HCT116 (cell line): ENCODE measurements at regions of chr1 and their contacts with region 1.

Region 1: DNA sequence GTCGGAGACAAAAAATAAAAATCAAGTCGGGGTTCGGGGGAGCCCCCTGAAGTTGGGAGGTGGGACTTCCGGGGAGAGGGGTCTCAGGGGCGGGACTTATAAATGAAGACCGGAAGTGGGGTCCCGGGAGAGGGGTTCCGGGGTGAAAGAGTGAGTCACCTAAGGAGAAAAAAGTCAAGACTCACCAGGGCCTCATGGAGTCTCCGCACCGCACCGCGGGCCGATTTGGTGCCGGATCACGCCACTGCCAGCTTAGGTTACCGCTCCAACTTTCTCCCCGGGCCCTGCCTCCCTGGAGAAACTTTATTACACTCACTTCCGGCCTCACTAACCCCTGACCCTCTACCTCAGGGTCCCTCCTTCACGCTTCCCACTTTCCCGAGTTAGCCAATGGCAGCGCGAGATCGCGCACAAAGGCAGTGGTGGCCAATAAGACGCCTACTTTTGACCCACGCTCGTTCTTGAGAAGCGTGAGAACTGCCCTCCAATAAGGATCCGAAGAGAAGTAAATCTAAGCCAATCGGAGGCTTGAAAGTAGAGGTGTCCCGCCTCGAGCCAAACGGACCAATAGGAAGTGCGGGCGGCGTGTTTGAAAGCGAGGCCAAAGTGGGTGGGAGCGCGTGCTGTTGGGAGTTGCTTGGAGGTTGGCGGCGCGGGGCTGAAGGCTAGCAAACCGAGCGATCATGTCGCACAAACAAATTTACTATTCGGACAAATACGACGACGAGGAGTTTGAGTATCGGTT is at the start of gene CKS1B:
- DNase-seq: peak; percentile 100
- ATAC-seq: peak; percentile 78
- H3K4me3 ChIP-seq: peak within 1 kb of the TSS; percentile 61 to 70
- H3K27ac ChIP-seq: peak within 1 kb of the TSS; percentile 86
- H3K4me1 ChIP-seq: peaks cover 40 to 64% of the 10 kb centered on the region in 2 experiments
- H3K27me3 ChIP-seq: no peaks in the 10 kb centered on the region
- CTCF ChIP-seq: no peak
- POLR2A ChIP-seq: no peak
- RAD21 ChIP-seq: no peak
- total RNA-seq, gene CKS1B: 229 TPM

Region 2: GRCh38 chr1:154961497-154962262 is 12.6 kb before region 1 on chr1 and contains the start of gene PYGO2:
- CTCF ChIA-PET with region 1: interaction called, 15 read pairs
- POLR2A ChIA-PET with region 1: interaction called, 38 read pairs
- RAD21 ChIA-PET with region 1: no interaction called
- intact Hi-C with region 1: no loop called
- DNase-seq: no peak
- ATAC-seq: peak; percentile 85
- H3K4me3 ChIP-seq: peak within 1 kb of the TSS; percentile 64 to 80
- H3K27ac ChIP-seq: peak within 1 kb of the TSS; percentile 92
- H3K4me1 ChIP-seq: peaks cover 18 to 48% of the 10 kb centered on the region in 2 experiments
- H3K27me3 ChIP-seq: no peaks in the 10 kb centered on the region
- CTCF ChIP-seq: peak in 2 of 3 experiments; percentile 32 to 54; a peak in 3 of 6 replicates
- POLR2A ChIP-seq: peak; percentile 65
- RAD21 ChIP-seq: no peak; the same call in 1 of the 2 replicates
- total RNA-seq, gene PYGO2: 37.2 TPM

Region 3: DNA sequence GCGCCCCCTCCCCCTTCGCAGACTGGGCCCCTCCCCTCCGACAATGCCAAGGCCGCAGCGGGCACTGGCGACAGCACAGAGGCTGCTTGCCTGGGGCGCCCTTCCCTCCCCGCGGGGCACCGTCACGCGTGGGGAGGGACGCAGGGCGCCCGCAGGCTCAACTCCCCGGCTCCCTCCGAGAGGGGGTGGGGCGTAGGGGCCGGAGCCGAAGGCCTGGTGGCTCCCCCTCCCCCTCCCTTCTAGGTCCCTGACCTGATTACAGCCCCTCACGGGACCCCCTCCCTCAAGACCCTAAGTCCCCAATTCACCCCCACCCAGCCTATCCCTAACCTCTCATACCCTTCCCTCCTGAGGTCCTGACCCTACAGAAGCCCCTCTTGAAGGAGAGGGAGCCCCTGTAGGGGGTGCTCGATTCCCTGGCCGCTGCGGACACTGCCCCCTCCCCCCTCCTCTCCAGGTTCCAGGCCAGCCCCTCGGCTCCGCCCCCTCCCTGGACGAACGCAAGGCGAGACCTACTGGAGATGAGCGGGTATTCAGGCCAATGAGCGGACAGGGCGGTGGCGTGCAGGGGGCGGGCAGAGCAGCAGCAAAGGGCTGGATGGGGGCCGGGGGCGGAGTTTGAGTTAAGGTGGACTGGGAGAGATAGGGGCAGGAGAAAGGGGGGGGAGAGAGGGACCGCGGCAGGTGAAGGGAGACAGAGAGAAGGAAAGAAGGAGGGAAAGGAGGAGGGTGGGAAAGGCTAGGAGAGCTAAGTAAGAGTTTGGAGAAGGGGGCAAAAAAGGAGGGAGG is 27.6 kb after region 1 on chr1:
- CTCF ChIA-PET with region 1: interaction called, 14 read pairs
- POLR2A ChIA-PET with region 1: interaction called, 22 read pairs
- RAD21 ChIA-PET with region 1: interaction called in 1 of 2 experiments, 4 read pairs
- intact Hi-C with region 1: loop called (anchors 1 kb)
- DNase-seq: peak; percentile 99
- ATAC-seq: peak; percentile 72
- H3K4me3 ChIP-seq: peak overlapping the region; percentile 85 to 98
- H3K27ac ChIP-seq: peak overlapping the region; percentile 99
- H3K4me1 ChIP-seq: peaks cover 22 to 66% of the 10 kb centered on the region in 2 experiments
- H3K27me3 ChIP-seq: no peaks in the 10 kb centered on the region
- CTCF ChIP-seq: peak in 2 of 3 experiments; percentile 52; a peak in 4 of 6 replicates
- POLR2A ChIP-seq: no peak
- RAD21 ChIP-seq: no peak

Region 4: DNA sequence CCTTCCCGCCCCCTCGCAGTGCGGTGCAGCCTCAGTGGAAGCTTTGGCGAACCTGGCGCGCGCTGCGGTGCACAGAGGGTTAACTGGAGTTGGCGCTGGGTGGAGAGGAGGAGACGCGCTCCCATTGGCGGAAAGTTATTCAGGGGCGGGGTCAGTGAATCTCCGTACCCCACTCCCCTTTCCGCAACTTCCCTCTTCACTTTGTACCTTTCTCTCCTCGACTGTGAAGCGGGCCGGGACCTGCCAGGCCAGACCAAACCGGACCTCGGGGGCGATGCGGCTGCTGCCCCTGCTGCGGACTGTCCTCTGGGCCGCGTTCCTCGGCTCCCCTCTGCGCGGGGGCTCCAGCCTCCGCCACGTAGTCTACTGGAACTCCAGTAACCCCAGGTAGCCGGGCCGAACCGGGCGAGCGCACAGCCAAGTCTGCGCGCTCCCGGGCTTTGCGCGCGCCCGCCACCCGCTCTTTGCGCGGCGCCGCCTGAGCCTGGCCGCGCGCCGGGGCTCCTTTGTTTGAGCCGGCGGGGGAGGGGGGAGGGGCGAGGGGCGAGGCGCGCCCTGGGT is 89.4 kb after region 1 on chr1 and contains the start of gene EFNA4:
- CTCF ChIA-PET with region 1: no interaction called
- POLR2A ChIA-PET with region 1: interaction called, 4 read pairs
- RAD21 ChIA-PET with region 1: no interaction called
- intact Hi-C with region 1: loop called (anchors 5 kb)
- DNase-seq: peak; percentile 79
- ATAC-seq: peak; percentile 79
- H3K4me3 ChIP-seq: peak within 1 kb of the TSS; percentile 77 to 84
- H3K27ac ChIP-seq: peak within 1 kb of the TSS; percentile 93
- H3K4me1 ChIP-seq: peaks cover 21 to 35% of the 10 kb centered on the region in 2 experiments
- H3K27me3 ChIP-seq: no peaks in the 10 kb centered on the region
- CTCF ChIP-seq: no peak
- POLR2A ChIP-seq: peak; percentile 76
- RAD21 ChIP-seq: no peak
- total RNA-seq, gene EFNA4: 9.8 TPM

Region 5: DNA sequence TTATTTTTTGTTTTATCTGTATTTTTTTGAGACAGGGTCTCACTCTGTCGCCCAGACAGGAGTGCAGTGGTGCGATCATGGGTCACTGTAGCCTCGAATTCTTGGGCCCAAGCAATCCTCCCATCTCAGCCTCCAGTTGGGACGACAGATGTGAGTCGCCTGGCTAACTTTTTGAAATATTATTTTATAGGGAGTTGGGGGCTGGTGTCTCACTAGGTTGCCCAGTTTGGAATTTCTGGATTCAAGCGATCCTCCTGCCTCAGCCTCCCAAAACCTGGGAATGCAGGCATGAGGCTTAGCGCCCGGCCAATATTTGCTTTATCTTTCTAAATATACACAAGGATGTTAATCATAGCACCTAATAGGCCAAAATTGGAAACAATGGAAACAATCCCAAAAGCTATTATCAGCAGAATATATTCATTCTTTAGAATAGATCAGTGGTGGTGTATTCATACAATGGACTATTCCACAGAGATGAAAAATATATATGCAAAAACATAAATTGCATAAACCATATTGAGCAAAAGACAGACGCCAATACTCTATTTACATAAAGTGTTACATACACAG is 770.6 kb after region 1 on chr1:
- CTCF ChIA-PET with region 1: no interaction called
- POLR2A ChIA-PET with region 1: no interaction called
- RAD21 ChIA-PET with region 1: no interaction called
- intact Hi-C with region 1: no loop called
- DNase-seq: no peak
- ATAC-seq: no peak
- H3K4me3 ChIP-seq: peak overlapping the region; percentile 66 to 78
- H3K27ac ChIP-seq: peak overlapping the region; percentile 24; the same call in 1 of the 2 replicates
- H3K4me1 ChIP-seq: peaks cover 2 to 7% of the 10 kb centered on the region in 2 experiments; a peak in 3 of 4 replicates
- H3K27me3 ChIP-seq: no peaks in the 10 kb centered on the region
- CTCF ChIP-seq: no peak
- POLR2A ChIP-seq: no peak
- RAD21 ChIP-seq: no peak